Natural killer cell (primary cell): ENCODE measurements at regions of chr2 and their contacts with region 1.

Region 1: DNA sequence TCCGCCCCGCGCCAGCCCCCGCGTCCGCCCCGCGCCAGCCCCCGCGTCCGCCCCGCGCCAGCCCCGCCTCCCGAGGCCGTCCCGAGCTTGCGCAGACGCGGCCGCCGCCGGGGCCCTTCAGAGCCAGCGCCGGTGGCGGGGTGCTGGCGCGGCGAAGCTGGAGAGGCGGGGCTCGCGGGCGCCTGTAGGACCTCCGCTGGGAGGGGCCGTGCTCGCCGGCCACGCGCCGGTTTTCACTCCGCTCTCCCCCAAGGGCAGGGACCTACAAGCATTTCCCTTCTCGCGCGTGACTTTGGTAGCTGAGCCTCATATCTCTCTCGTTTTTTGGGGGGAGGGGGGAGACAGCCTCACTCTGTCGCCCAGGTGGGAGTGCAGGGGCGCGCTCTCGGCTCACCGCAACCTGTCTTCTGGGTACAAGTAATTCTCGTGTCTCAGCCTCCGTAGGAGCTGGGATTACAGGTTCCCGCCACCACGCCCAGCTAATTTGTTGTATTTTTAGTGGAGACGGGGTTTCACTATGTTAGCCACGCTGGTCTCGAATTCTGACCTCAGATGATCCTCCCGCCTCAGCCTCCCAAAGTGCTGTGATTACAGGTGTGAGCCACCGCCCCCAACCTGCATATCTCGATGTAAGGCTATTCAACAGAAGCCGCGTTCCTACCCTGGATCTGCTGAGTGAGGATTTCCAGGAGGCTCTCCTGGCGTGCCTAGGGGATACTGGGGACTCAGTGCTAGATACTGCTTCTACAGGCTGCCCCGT is at the start of gene ZNF514:
- DNase-seq: peak; percentile 80 to 88
- ATAC-seq: peak; percentile 93 to 94 (median 94)
- H3K4me3 ChIP-seq: peak within 1 kb of the TSS; percentile 90
- H3K4me3 Mint-ChIP-seq: peak within 1 kb of the TSS; percentile 94
- H3K27ac ChIP-seq: peak within 1 kb of the TSS; percentile 72
- H3K27ac Mint-ChIP-seq: peak within 1 kb of the TSS; percentile 85 to 86
- H3K4me1 ChIP-seq: peaks cover 19% of the 10 kb centered on the region
- H3K4me1 Mint-ChIP-seq: peaks cover 4 to 10% of the 10 kb centered on the region in 2 donors
- H3K27me3 ChIP-seq: no peaks in the 10 kb centered on the region
- H3K27me3 Mint-ChIP-seq: no peaks in the 10 kb centered on the region
- CTCF ChIP-seq: no peak
- total RNA-seq, gene ZNF514: 12.4 to 26.0 (median 12.8) TPM

Region 2: DNA sequence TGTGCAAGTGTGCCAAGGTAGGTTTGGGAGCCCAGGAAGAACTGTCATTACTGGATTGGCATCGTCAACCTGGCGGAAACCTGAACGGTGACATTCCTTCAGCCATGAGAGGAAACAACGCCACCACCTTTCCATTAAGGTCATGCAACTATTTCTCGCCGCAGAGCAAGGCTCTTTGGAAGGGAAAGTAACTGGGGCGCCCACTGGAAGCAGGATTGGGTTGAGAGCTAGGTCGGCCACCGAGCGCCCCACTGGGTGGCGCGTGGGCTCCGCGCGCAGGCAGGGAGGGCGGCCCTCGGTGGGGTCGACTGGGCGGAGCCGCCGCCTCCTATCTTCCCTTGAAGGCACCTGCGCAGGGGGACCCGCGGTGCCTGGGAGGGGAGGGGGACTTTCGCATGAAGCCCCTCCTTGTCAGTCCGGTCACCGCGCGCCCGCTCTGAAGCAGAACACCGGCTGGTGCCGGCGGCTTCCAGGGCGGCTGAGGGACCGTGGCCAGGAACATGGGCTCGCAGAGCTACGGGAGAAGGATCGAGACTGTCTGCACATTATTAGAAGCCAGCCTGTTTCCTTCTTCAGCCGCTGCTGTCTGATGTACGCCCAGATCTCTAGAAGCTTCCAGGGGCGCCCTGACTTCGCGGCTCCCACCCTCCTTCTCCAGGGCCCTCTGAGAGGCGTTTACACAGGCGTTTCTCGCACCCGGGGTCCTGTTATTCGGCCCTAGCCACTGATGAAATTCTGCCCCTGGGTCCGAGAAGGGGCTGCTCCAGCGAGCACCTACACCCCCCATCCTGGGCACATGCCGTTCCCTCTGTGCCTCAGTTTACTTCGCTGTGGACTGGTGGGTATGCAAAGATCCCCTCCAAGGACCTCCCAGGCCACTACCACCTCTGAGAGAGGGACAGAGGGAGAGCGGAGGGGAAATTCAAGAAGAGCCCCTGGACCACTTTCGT is 161.6 kb before region 1 on chr2:
- intact Hi-C with region 1: no loop called
- DNase-seq: peak in 1 of 2 donors; percentile 15
- ATAC-seq: no peak
- H3K4me3 ChIP-seq: no peak overlapping the region
- H3K4me3 Mint-ChIP-seq: no peak overlapping the region
- H3K27ac ChIP-seq: no peak overlapping the region
- H3K27ac Mint-ChIP-seq: no peak overlapping the region
- H3K4me1 ChIP-seq: no peaks in the 10 kb centered on the region
- H3K4me1 Mint-ChIP-seq: no peaks in the 10 kb centered on the region
- H3K27me3 ChIP-seq: peaks cover 3% of the 10 kb centered on the region
- H3K27me3 Mint-ChIP-seq: peaks cover 8 to 10% of the 10 kb centered on the region in 2 donors
- CTCF ChIP-seq: no peak

Region 3: GRCh38 chr2:95121407-95122196 is 38.3 kb before region 1 on chr2 and contains the start of gene MRPS5:
- intact Hi-C with region 1: loop called (anchors 2 kb)
- DNase-seq: peak; percentile 86 to 87
- ATAC-seq: peak; percentile 96
- H3K4me3 ChIP-seq: peak within 1 kb of the TSS; percentile 97
- H3K4me3 Mint-ChIP-seq: peak within 1 kb of the TSS; percentile 96
- H3K27ac ChIP-seq: peak within 1 kb of the TSS; percentile 90
- H3K27ac Mint-ChIP-seq: peak within 1 kb of the TSS; percentile 90
- H3K4me1 ChIP-seq: peaks cover 19% of the 10 kb centered on the region
- H3K4me1 Mint-ChIP-seq: peaks cover 46 to 50% of the 10 kb centered on the region in 2 donors
- H3K27me3 ChIP-seq: peaks cover under 1% of the 10 kb centered on the region
- H3K27me3 Mint-ChIP-seq: peaks cover 0 to 3% of the 10 kb centered on the region in 2 donors
- CTCF ChIP-seq: no peak
- total RNA-seq, gene MRPS5: 26.4 to 40.0 (median 29.8) TPM